ENCODE measurements at regions of chr7 and their contacts with region 1.

Region 1: GRCh38 chr7:48173756-48174382 is 2.6 kb downstream of the ABCA13 start:
- DNase-seq: no peak
- H3K4me3 Mint-ChIP-seq: no peak overlapping the region
- H3K27ac Mint-ChIP-seq: peak overlapping the region; percentile 48
- H3K4me1 Mint-ChIP-seq: peaks cover 24% of the 10 kb centered on the region
- H3K27me3 Mint-ChIP-seq: no peaks in the 10 kb centered on the region
- CTCF ChIP-seq: no peak

Region 2: DNA sequence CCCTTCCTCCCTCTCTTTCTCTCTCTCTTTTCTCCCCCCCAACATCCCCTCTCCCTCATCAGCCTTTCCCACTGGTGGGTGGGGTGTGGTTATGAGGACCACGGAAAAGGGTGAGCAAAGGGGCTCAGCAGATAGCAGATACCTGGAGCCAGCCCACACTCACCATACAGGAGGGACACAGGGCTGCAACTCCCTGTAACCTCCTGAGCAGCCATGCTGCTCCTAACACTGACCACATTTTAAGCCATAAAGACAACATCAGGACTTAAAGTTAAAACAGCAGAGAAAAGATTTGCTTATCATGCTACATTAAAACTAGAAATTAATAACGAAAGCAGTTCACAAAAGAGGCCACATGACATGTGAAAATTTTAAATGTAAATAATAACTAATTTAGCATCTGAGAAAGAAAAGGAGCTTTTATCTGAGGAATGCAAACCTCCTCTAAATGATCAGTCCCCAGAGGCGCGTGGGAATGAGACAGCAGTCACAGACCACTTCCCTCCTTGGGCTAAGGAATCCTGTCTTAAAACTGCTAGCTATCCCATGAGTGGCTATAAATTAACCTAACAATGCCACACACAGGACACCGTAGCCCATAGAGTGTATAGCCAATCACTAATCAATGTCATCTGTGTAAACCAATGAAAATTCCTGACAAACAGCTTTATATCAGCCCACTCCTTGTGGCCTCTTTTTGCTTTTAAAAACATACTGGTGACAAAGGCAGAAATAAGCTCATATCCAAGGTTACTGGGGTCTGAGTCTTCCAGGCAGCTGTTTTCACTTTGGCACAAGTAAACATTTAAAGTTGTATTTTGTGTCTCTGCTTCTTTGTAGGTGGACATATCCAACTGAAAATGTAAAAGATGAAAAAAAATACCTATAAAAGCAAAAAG is 258.9 kb before region 1 on chr7:
- CTCF ChIA-PET with region 1: no interaction called
- intact Hi-C with region 1: no loop called
- DNase-seq: no peak
- H3K4me3 Mint-ChIP-seq: no peak overlapping the region
- H3K27ac Mint-ChIP-seq: no peak overlapping the region
- H3K4me1 Mint-ChIP-seq: no peaks in the 10 kb centered on the region
- H3K27me3 Mint-ChIP-seq: peaks cover 78% of the 10 kb centered on the region
- CTCF ChIP-seq: no peak

Region 3: GRCh38 chr7:48158404-48158803 is 15.5 kb before region 1 on chr7:
- CTCF ChIA-PET with region 1: no interaction called
- intact Hi-C with region 1: no loop called
- DNase-seq: no peak
- H3K4me3 Mint-ChIP-seq: no peak overlapping the region
- H3K27ac Mint-ChIP-seq: no peak overlapping the region
- H3K4me1 Mint-ChIP-seq: peaks cover 12% of the 10 kb centered on the region
- H3K27me3 Mint-ChIP-seq: peaks cover 8% of the 10 kb centered on the region
- CTCF ChIP-seq: no peak

Region 4: DNA sequence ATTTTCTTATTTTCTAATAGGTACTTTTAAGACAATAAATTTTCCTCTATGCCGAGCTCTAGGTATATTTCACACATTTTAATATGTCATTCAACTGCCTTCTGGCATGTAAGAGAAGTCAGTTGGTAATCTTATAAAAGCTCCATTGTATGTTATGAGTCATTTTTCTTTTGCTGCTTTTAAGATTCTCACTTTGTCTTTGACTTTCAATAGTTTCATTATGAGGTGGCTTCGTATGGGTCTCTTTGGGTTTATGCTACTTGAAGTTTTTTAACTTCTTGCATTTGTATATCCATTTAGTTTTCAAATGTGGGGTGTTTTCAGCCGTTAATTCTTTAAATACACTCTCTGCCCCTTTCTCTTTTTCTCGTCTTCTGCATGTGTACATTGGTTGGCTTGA is 77.9 kb after region 1 on chr7:
- CTCF ChIA-PET with region 1: no interaction called
- intact Hi-C with region 1: loop called (anchors 2 kb)
- DNase-seq: no peak
- H3K4me3 Mint-ChIP-seq: peak overlapping the region; percentile 5
- H3K27ac Mint-ChIP-seq: peak overlapping the region; percentile 48
- H3K4me1 Mint-ChIP-seq: peaks cover 40% of the 10 kb centered on the region
- H3K27me3 Mint-ChIP-seq: no peaks in the 10 kb centered on the region
- CTCF ChIP-seq: no peak